ENCODE measurements at regions of chr22 and their contacts with region 1.

Region 1: DNA sequence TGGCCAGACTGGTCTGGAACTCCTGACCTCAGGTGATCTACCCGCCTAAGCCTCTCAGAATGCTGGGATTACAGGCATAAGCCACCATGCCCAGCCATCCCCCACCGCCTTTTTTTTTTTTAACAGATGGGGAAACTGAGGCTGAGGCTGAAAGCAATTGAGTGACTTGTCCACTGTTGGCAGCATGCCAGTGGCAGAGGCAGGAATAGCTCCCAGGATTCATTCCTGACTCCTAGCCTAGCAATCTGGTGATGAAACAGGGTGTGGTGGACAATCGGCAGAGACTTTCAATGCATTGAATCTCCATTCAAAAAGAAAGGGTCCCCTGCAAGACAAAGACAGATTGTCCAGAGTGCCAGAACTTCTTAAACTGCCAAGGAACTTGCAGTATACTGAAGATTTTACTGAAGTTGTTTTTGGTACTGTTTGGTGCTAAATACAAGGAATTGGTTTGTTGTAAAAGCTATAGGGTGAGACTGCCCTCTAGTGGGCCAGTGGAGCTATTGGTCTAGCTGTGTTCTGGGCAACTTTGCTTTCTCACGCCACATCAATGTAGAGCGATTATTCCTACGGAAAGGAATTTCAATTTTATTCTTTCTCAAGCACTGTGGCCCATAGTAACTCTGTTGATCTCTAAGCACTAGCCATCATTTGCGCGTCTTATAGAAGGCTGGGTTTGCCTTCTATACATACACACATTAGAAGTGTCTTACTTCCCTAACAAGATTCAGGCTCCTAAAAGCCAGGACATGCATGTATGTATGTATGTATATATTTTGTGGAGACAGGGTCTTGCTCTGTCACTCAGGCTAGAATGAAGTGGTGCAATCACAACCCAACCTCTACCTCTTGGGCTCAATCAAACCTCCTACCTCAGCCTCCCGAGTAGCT is 21.0 kb downstream of the C22orf31 start:
- DNase-seq: peak; percentile 83 to 91 (median 86)
- H3K4me3 ChIP-seq: peak overlapping the region in 1 of 7 experiments; percentile 37
- H3K27ac ChIP-seq: no peak overlapping the region
- H3K4me1 ChIP-seq: peaks cover 4 to 14% (median 13%) of the 10 kb centered on the region in 4 experiments
- H3K27me3 ChIP-seq: no peaks in the 10 kb centered on the region

Region 2: DNA sequence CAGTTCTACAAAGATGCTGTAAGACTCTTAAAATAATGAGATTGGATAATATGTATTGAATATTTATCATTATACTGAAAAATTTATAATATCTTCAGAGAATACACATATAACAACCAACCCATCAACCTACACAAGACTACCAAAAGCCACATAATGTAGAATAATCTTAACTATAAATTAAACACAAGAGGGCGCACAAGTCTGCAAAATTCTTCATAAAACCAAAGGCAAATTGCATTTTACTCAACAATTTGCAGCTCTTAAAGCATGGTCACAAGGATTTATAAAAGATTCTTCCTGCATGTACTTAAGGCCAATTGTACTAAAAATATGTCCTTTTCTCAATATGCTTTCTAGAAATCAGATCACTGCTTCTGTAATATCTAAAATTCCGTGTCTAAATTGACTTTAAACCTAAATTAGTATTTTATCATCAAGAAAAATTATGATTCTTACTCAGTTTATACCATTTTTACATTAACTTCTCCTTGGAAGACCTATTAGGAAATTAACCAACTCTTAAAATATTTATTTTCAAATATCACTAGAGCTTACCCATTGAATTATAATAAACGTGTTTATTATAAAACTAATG is 440.0 kb before region 1 on chr22:
- CTCF ChIA-PET with region 1: interaction called, 20 read pairs
- POLR2A ChIA-PET with region 1: no interaction called
- DNase-seq: peak; percentile 55 to 83 (median 76)
- H3K4me3 ChIP-seq: no peak overlapping the region
- H3K27ac ChIP-seq: no peak overlapping the region
- H3K4me1 ChIP-seq: peaks cover 0 to 2% (median 0%) of the 10 kb centered on the region in 4 experiments
- H3K27me3 ChIP-seq: no peaks in the 10 kb centered on the region

Region 3: GRCh38 chr22:28783786-28784671 is 256.6 kb before region 1 on chr22:
- CTCF ChIA-PET with region 1: interaction called, 10 read pairs
- POLR2A ChIA-PET with region 1: no interaction called
- DNase-seq: peak in 2 of 3 donors; percentile 58 to 69
- H3K4me3 ChIP-seq: no peak overlapping the region
- H3K27ac ChIP-seq: peak overlapping the region in 1 of 2 experiments; percentile 52
- H3K4me1 ChIP-seq: peaks cover 0 to 4% (median under 1%) of the 10 kb centered on the region in 4 experiments
- H3K27me3 ChIP-seq: no peaks in the 10 kb centered on the region

Region 4: GRCh38 chr22:28855355-28856094 is 185.1 kb before region 1 on chr22:
- CTCF ChIA-PET with region 1: interaction called, 15 read pairs
- POLR2A ChIA-PET with region 1: no interaction called
- DNase-seq: peak; percentile 79 to 87 (median 80)
- H3K4me3 ChIP-seq: no peak overlapping the region
- H3K27ac ChIP-seq: no peak overlapping the region
- H3K4me1 ChIP-seq: no peaks in the 10 kb centered on the region
- H3K27me3 ChIP-seq: peaks cover 0 to 4% (median 0%) of the 10 kb centered on the region in 5 experiments

Region 5: GRCh38 chr22:28864878-28865596 is 175.6 kb before region 1 on chr22:
- CTCF ChIA-PET with region 1: interaction called, 10 read pairs
- POLR2A ChIA-PET with region 1: no interaction called
- DNase-seq: no peak
- H3K4me3 ChIP-seq: no peak overlapping the region
- H3K27ac ChIP-seq: no peak overlapping the region
- H3K4me1 ChIP-seq: no peaks in the 10 kb centered on the region
- H3K27me3 ChIP-seq: no peaks in the 10 kb centered on the region